Activated CD4-positive, alpha-beta T cell treated with anti-CD3 and anti-CD28 coated beads for 36 hours (primary cell): ENCODE measurements at regions of chr1 and their contacts with region 1.

Region 1: DNA sequence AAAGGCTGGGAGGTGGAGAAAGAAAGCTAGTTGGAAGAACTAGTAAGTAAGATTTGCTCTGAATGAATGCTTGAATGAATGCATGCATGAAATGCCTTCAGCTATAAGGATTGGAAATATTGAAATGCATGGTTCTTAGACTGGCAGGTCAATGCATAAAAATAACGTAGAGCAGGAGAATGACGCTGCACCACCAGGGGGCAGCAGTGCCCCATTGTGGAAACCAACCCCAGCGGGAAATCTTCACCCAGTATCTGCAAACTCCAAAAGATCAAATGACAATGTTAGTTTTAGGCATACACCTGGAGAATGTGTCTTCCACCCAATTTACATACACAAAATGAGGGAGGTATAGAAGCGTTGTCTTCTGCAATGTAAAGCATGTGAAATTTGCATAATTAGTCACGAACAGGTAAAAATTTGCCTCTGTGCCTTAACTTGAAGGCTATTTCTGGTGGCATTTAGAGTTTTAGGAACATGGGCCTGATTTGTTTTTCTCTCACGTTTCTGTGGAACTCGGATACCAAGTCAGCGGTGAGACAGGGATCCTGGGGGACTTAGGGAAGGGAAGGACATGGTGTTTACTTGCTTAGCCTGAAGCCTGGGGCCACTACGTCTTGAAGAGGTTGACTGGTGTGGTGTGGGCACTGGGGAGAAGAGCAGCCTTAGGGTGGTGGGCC is 78.6 kb downstream of the HHAT start:
- DNase-seq: peak; percentile 88
- ATAC-seq: peak; percentile 83
- H3K4me3 Mint-ChIP-seq: no peak overlapping the region
- H3K27ac Mint-ChIP-seq: no peak overlapping the region
- H3K4me1 Mint-ChIP-seq: peaks cover 4% of the 10 kb centered on the region
- H3K27me3 Mint-ChIP-seq: no peaks in the 10 kb centered on the region

Region 2: DNA sequence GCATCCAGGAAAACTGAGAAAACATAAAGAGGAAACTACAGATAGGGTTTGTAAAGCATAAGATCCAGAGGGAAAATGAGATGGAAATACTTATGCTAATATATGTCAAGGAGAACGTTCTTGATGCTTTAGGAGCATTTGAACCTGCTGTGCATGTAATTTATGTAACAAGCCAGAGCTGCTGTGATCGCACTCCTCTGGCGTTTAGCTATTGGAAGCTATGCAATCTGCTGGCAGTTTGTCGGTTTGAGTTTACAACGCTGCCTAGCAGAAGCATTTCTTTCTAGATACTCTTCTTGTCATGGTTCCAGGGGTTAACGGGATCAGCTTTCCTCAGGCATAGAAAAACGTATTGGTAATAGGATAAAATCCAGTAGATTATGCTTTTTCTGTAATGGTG is 543.9 kb after region 1 on chr1:
- CTCF ChIA-PET with region 1: interaction called, 4 read pairs
- POLR2A ChIA-PET with region 1: no interaction called
- intact Hi-C with region 1: loop called (anchors 1 kb)
- DNase-seq: no peak
- ATAC-seq: no peak
- H3K4me3 Mint-ChIP-seq: no peak overlapping the region
- H3K27ac Mint-ChIP-seq: no peak overlapping the region
- H3K4me1 Mint-ChIP-seq: no peaks in the 10 kb centered on the region
- H3K27me3 Mint-ChIP-seq: peaks cover 6% of the 10 kb centered on the region